ENCODE measurements at regions of chr5 and their contacts with region 1.

Region 1: GRCh38 chr5:152593407-152593932 is 188.4 kb upstream of the NMUR2 start:
- DNase-seq: no peak
- ATAC-seq: peak; percentile 50; the same call in 1 of the 3 replicates
- H3K4me3 ChIP-seq: no peak overlapping the region
- H3K27ac ChIP-seq: no peak overlapping the region
- H3K4me1 ChIP-seq: no peaks in the 10 kb centered on the region
- H3K27me3 ChIP-seq: no peaks in the 10 kb centered on the region
- CTCF ChIP-seq: peak in 1 of 3 experiments; percentile 19; a peak in 2 of 6 replicates
- EP300 ChIP-seq: no peak
- POLR2A ChIP-seq: no peak
- RAD21 ChIP-seq: no peak

Region 2: GRCh38 chr5:152142840-152143469 is 450.5 kb before region 1 on chr5:
- CTCF ChIA-PET with region 1: no interaction called
- POLR2A ChIA-PET with region 1: no interaction called
- RAD21 ChIA-PET with region 1: no interaction called
- SMC1A ChIA-PET with region 1: no interaction called
- in situ Hi-C with region 1: no loop called
- intact Hi-C with region 1: no loop called
- DNase-seq: peak; percentile 3
- ATAC-seq: peak; percentile 96
- H3K4me3 ChIP-seq: no peak overlapping the region
- H3K27ac ChIP-seq: no peak overlapping the region
- H3K4me1 ChIP-seq: no peaks in the 10 kb centered on the region
- H3K27me3 ChIP-seq: no peaks in the 10 kb centered on the region; a peak in 1 of 4 replicates
- CTCF ChIP-seq: peak; percentile 90 to 92 (median 90)
- EP300 ChIP-seq: no peak
- POLR2A ChIP-seq: no peak
- RAD21 ChIP-seq: peak; percentile 86

Region 3: GRCh38 chr5:152170350-152170749 is 423.1 kb before region 1 on chr5:
- CTCF ChIA-PET with region 1: no interaction called
- POLR2A ChIA-PET with region 1: no interaction called
- RAD21 ChIA-PET with region 1: no interaction called
- SMC1A ChIA-PET with region 1: no interaction called
- in situ Hi-C with region 1: no loop called
- intact Hi-C with region 1: no loop called
- DNase-seq: no peak
- ATAC-seq: no peak
- H3K4me3 ChIP-seq: no peak overlapping the region
- H3K27ac ChIP-seq: no peak overlapping the region
- H3K4me1 ChIP-seq: no peaks in the 10 kb centered on the region
- H3K27me3 ChIP-seq: no peaks in the 10 kb centered on the region
- CTCF ChIP-seq: no peak
- EP300 ChIP-seq: no peak
- POLR2A ChIP-seq: no peak
- RAD21 ChIP-seq: no peak

Region 4: GRCh38 chr5:152532714-152533113 is 60.8 kb before region 1 on chr5:
- CTCF ChIA-PET with region 1: interaction called, 3 read pairs
- POLR2A ChIA-PET with region 1: no interaction called
- RAD21 ChIA-PET with region 1: no interaction called
- SMC1A ChIA-PET with region 1: no interaction called
- in situ Hi-C with region 1: no loop called
- intact Hi-C with region 1: loop called (anchors 2 kb)
- DNase-seq: peak; percentile 15
- ATAC-seq: peak; percentile 80
- H3K4me3 ChIP-seq: no peak overlapping the region
- H3K27ac ChIP-seq: no peak overlapping the region
- H3K4me1 ChIP-seq: no peaks in the 10 kb centered on the region
- H3K27me3 ChIP-seq: no peaks in the 10 kb centered on the region
- CTCF ChIP-seq: peak; percentile 32 to 65 (median 43); a peak in 4 of 6 replicates
- EP300 ChIP-seq: no peak
- POLR2A ChIP-seq: no peak
- RAD21 ChIP-seq: peak; percentile 86

Region 5: DNA sequence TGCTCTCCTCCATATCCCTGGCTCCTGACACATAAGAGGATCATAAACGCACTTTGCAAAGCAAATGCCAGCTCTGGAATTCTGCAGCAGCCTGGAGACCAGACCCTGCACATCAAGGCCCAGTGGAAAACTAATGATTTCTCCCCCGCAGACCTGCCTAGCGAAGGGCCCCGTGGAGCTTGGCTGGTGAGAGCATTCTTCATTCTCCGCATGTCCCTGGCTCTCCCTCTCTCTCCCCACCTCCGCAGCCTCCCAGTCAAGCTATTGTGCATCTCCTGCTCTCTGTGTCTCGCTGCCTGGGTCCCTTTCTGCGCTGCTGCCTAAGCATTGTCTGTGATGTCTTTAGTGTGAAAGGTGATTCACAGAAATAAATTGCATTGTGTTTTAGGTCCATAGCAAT is 943.7 kb after region 1 on chr5:
- CTCF ChIA-PET with region 1: no interaction called
- POLR2A ChIA-PET with region 1: no interaction called
- RAD21 ChIA-PET with region 1: no interaction called
- SMC1A ChIA-PET with region 1: no interaction called
- in situ Hi-C with region 1: no loop called
- intact Hi-C with region 1: no loop called
- DNase-seq: no peak
- ATAC-seq: no peak
- H3K4me3 ChIP-seq: no peak overlapping the region
- H3K27ac ChIP-seq: no peak overlapping the region
- H3K4me1 ChIP-seq: no peaks in the 10 kb centered on the region
- H3K27me3 ChIP-seq: no peaks in the 10 kb centered on the region
- CTCF ChIP-seq: no peak
- EP300 ChIP-seq: no peak
- POLR2A ChIP-seq: no peak
- RAD21 ChIP-seq: no peak